ENCODE measurements at regions of chr14 and their contacts with region 1.

Region 1: GRCh38 chr14:58072288-58073071 is 79.5 kb downstream of the ARMH4 start:
- DNase-seq: no peak
- ATAC-seq: peak; percentile 74

Region 2: GRCh38 chr14:57486767-57487379 is 585.6 kb before region 1 on chr14:
- intact Hi-C with region 1: loop called (anchors 1 kb)
- DNase-seq: no peak
- ATAC-seq: no peak

Region 3: GRCh38 chr14:58002618-58003017 is 69.9 kb before region 1 on chr14:
- intact Hi-C with region 1: no loop called
- DNase-seq: no peak
- ATAC-seq: no peak

Region 4: DNA sequence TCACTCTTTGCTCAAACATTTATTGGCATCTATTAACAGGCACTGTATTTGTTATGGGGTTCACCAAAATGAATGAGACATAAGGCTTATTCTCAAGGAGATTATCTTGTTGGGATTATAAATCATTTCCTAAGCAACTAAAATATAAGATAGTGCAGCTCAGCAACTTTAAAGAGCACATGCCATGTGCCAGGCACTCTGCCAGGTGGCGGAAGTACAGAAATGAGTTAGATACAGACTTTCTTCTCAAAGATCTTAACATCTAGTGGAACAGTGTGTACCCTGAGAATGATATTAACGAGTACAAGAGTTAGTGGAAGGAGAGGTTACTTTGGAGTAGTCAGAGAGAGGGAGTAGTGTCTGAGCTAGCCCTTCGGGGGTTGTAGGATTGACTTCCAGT is 294.8 kb after region 1 on chr14:
- intact Hi-C with region 1: no loop called
- DNase-seq: peak; percentile 37
- ATAC-seq: no peak